ENCODE measurements at regions of chrX and their contacts with region 1.

Region 1: GRCh38 chrX:68532831-68533533 is 34.1 kb downstream of the YIPF6 start:
- DNase-seq: no peak
- H3K4me3 ChIP-seq: no peak overlapping the region
- H3K27ac ChIP-seq: no peak overlapping the region
- H3K4me1 ChIP-seq: no peaks in the 10 kb centered on the region
- H3K27me3 ChIP-seq: no peaks in the 10 kb centered on the region
- CTCF ChIP-seq: no peak

Region 2: GRCh38 chrX:68719904-68720614 is 187.1 kb after region 1 on chrX:
- CTCF ChIA-PET with region 1: no interaction called
- POLR2A ChIA-PET with region 1: no interaction called
- intact Hi-C with region 1: no loop called
- DNase-seq: peak; percentile 18
- H3K4me3 ChIP-seq: no peak overlapping the region
- H3K27ac ChIP-seq: no peak overlapping the region
- H3K4me1 ChIP-seq: no peaks in the 10 kb centered on the region
- H3K27me3 ChIP-seq: no peaks in the 10 kb centered on the region
- CTCF ChIP-seq: peak; percentile 36; the same call in 1 of the 2 replicates

Region 3: DNA sequence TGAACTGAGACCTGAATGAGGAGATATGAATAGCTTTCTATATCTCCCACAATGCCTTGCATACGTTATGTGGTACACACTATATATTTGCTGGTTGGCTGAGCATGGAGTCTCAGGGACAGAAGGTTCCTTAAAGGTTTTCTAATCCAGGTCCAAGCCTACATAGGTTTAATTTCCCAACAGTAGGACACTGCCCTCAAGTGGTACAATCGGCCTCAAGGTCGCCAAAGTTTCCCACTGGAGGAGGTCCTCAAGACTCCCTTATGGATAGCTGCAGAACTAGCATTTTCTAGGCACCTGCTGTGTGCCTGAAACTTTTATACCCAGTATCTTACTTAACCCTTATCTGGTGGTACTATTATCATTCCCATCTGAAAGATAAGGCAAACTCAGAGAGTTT is 274.8 kb after region 1 on chrX:
- CTCF ChIA-PET with region 1: no interaction called
- POLR2A ChIA-PET with region 1: no interaction called
- intact Hi-C with region 1: loop called (anchors 10 kb)
- DNase-seq: peak; percentile 36
- H3K4me3 ChIP-seq: no peak overlapping the region
- H3K27ac ChIP-seq: no peak overlapping the region
- H3K4me1 ChIP-seq: no peaks in the 10 kb centered on the region
- H3K27me3 ChIP-seq: no peaks in the 10 kb centered on the region
- CTCF ChIP-seq: peak; percentile 41

Region 4: DNA sequence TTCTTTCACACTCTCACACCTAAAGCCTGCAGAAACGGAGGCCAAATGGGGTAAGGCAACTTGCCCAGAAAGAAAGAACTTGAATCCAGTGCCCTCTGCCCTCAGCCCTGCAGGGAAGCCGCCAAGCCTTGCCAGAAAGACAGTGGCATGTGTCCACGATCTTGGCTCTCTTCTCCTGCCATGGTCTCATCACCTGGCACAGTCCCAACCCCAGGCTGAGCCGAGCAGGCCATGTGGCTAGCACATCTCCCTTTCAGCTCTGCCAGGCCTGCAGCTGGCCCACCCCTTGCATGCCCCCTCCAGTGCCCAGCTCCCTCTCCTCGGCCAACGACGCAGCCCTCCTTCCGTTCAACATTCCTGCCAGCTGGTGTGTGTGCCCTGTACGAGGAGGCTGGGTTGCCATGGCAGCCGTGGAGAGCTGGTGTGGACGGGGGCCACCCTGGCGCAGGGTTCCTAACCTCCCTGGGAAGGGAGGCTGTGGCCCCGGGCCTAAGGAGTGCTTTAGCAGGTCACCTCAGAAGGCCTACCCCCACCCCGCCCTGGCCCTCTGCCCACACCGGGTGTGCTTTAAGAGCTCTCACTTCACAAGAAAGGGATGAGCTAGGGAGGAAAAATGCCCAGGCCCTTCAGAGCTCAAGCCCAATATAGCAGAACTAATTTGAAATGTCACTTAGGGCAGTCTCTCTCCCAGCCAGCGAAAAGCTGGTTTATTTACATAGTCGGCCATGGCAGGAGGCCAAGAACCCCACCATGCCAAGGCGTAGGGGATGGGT is 705.3 kb after region 1 on chrX:
- CTCF ChIA-PET with region 1: no interaction called
- POLR2A ChIA-PET with region 1: no interaction called
- intact Hi-C with region 1: no loop called
- DNase-seq: no peak
- H3K4me3 ChIP-seq: no peak overlapping the region
- H3K27ac ChIP-seq: no peak overlapping the region
- H3K4me1 ChIP-seq: peaks cover 5% of the 10 kb centered on the region
- H3K27me3 ChIP-seq: no peaks in the 10 kb centered on the region
- CTCF ChIP-seq: no peak